CD8-positive, alpha-beta T cell (primary cell): ENCODE measurements at regions of chrX and their contacts with region 1.

Region 1: DNA sequence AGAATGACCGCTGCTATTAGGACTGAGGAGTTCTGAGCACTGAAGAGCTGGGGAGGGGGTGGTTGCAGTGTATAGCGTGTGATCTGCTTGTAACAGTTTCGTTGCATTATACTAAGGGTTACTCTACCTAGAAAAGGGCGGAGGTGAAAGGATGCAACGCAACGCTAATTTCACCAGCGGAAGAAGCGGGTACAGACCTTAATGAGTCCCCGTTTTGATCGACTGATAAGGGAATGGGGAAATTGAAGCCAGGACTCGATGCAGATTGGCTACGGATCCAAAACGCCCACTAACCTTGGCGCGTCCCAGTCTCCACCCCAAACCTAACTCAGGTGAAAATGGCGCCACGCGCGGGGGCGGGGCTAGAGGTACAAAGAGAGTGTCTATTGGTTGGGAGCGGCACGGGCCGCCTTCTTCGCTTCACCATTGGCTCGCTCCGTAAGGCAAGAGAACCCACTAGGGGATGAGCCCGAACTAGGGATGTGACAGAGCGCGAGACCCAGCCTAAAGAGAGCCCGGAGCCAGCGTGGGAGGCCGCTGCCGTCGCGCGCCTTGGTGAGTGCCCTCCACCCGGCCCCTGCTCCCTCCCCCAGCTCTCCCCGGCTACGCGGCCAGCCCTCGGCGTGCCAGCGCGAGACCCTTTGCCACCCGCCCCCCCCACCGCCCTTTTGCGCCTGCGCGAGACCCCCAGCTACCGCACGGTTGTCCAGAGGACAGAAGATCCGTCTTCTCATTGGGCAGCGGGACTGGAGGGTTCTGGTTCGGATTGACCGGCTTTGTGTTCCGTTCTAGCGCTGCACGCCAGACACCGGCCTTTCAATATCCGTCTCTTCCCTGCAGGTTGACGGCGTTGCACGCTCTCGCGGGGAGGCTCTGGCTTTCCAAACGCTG is at the start of gene EBP:
- DNase-seq: peak; percentile 85 to 96 (median 92)
- ATAC-seq: peak; percentile 96
- H3K4me3 ChIP-seq: peak within 1 kb of the TSS; percentile 72 to 83
- H3K4me3 Mint-ChIP-seq: peak within 1 kb of the TSS; percentile 87
- H3K27ac ChIP-seq: peak within 1 kb of the TSS; percentile 80 to 90
- H3K27ac Mint-ChIP-seq: peak within 1 kb of the TSS; percentile 95
- H3K4me1 ChIP-seq: peaks cover 19% of the 10 kb centered on the region
- H3K4me1 Mint-ChIP-seq: peaks cover 38% of the 10 kb centered on the region
- H3K27me3 ChIP-seq: no peaks in the 10 kb centered on the region
- H3K27me3 Mint-ChIP-seq: no peaks in the 10 kb centered on the region
- CTCF ChIP-seq: no peak
- total RNA-seq, gene EBP: 55.2 to 56.9 TPM

Region 2: GRCh38 chrX:48508400-48509244 is 13.0 kb before region 1 on chrX and contains the start of gene PORCN:
- CTCF ChIA-PET with region 1: no interaction called
- POLR2A ChIA-PET with region 1: interaction called, 4 read pairs
- intact Hi-C with region 1: loop called (anchors 1 kb)
- DNase-seq: peak; percentile 56 to 85 (median 81)
- ATAC-seq: peak; percentile 93
- H3K4me3 ChIP-seq: peak within 1 kb of the TSS; percentile 76 to 79
- H3K4me3 Mint-ChIP-seq: peak within 1 kb of the TSS; percentile 90
- H3K27ac ChIP-seq: peak within 1 kb of the TSS; percentile 76 to 78
- H3K27ac Mint-ChIP-seq: peak within 1 kb of the TSS; percentile 94
- H3K4me1 ChIP-seq: peaks cover 6% of the 10 kb centered on the region
- H3K4me1 Mint-ChIP-seq: peaks cover 25% of the 10 kb centered on the region
- H3K27me3 ChIP-seq: no peaks in the 10 kb centered on the region
- H3K27me3 Mint-ChIP-seq: no peaks in the 10 kb centered on the region
- CTCF ChIP-seq: no peak
- total RNA-seq, gene PORCN: 18.3 to 19.8 TPM

Region 3: GRCh38 chrX:48597353-48598264 is 76.0 kb after region 1 on chrX and contains the start of gene WDR13:
- CTCF ChIA-PET with region 1: no interaction called
- POLR2A ChIA-PET with region 1: no interaction called
- intact Hi-C with region 1: loop called in 1 of 2 experiments (anchors 1 kb)
- DNase-seq: peak; percentile 79 to 94 (median 90)
- ATAC-seq: peak; percentile 82
- H3K4me3 ChIP-seq: peak within 1 kb of the TSS; percentile 90 to 99
- H3K4me3 Mint-ChIP-seq: peak within 1 kb of the TSS; percentile 94
- H3K27ac ChIP-seq: peak within 1 kb of the TSS; percentile 100
- H3K27ac Mint-ChIP-seq: peak within 1 kb of the TSS; percentile 100
- H3K4me1 ChIP-seq: peaks cover 7% of the 10 kb centered on the region
- H3K4me1 Mint-ChIP-seq: peaks cover 10% of the 10 kb centered on the region
- H3K27me3 ChIP-seq: no peaks in the 10 kb centered on the region
- H3K27me3 Mint-ChIP-seq: no peaks in the 10 kb centered on the region
- CTCF ChIP-seq: no peak
- total RNA-seq, gene WDR13: 41.6 to 51.6 TPM